Heart right ventricle (tissue), 16 donors: ENCODE measurements at regions of chr13 and their contacts with region 1.

Region 1: GRCh38 chr13:21124852-21125251 is 51.5 kb downstream of the SKA3 start:
- DNase-seq: no peak
- ATAC-seq: no peak
- H3K4me3 ChIP-seq: no peak overlapping the region
- H3K27ac ChIP-seq: no peak overlapping the region
- H3K4me1 ChIP-seq: no peaks in the 10 kb centered on the region
- H3K27me3 ChIP-seq: no peaks in the 10 kb centered on the region
- CTCF ChIP-seq: no peak

Region 2: DNA sequence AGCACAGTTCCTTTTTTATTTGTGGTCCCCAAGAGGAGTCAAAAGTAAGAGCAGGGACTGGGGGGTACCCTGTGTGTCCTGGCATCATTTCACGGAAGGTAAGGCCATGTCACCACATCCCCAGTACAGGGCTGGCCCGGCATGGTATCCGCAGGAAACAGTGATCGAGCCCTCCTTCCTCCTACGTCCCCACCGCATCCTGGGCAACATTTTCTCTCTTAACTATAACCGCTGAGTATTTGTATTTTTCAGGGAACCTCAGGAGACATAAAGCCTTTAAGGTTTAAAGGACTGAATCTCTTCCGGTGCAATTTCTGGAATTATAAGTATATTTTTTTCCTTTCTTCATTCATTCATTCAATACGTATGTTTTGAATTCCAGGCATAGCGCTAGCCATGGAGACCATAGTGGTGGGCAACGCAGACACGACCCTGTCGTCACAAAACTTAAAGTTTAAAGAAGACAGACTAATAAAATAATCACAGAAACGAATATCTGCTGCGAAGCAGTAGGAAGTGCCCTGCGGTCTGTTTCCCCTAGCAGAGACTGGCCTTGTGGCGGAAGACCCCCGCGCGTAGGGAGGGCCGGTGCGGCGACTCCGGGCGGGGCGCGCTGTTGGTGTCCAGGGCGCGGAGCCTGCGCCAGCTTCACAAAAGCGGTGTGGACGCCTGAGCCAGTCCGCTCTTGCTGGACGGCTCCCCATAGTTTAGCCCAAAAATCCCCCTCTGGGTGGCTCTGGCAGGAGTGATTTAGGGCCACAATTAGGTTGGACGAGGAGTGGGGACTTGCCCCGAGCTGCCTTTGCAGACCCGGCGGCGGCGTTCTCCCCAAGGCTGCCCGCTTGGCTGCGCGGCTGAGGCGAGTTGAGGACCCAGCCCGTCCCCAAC is 49.6 kb before region 1 on chr13:
- intact Hi-C with region 1: loop called in 1 of 10 experiments (anchors 10 kb)
- DNase-seq: peak; percentile 32 to 38
- ATAC-seq: peak; percentile 61 to 82 (median 76)
- H3K4me3 ChIP-seq: peak overlapping the region; percentile 36 to 74 (median 62)
- H3K27ac ChIP-seq: peak overlapping the region; percentile 65 to 88 (median 73)
- H3K4me1 ChIP-seq: peaks cover 0 to 44% (median 22%) of the 10 kb centered on the region in 9 donors
- H3K27me3 ChIP-seq: no peaks in the 10 kb centered on the region
- CTCF ChIP-seq: no peak